ENCODE measurements at regions of chr11 and their contacts with region 1.

Region 1: DNA sequence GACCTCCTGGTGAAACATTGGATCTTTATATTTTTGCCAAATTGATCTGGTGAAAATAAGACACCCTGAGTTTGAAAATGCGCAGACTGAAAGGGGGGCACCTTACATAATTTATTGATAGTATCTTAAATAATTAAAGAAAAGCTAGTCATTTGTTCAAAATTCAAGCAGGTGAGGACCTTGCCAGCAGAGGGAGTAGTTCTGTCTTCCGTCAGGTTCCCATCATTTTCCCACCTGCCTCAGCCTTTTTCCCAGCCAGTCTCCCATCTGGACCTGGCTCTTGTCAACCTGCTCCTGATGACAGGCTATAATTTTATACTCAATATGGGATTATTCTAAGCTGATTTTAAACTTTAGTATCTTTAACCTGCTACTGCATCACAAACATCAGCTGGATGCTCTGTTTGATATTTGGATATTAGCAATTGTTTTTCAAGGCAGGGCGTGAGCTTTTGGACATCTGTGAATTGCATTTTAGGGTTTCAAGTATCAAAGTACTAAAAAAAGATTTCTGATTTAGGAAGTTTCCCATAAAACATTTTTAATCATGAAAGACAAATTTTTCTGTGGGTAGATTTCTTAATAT is 132.0 kb downstream of the ELP4 start:
- DNase-seq: peak; percentile 49

Region 2: DNA sequence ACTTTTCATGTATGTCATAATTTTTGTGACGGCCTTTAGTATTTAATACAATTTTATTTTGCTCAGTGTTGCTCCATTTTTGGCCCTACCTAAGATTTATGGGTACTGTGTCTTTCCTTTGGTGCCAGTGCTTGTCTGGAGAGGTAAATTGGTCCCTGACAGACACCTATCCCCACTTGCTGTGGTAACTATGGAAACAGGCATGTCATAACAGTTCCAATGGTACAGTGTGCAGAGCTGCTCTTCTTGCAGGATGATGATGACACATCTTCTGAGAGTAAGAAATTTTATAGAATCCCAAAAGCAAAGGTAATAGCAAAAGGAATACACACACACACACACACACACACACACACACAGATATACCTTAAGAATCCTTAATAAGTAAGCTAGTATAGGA is 13.5 kb before region 1 on chr11:
- CTCF ChIA-PET with region 1: no interaction called
- POLR2A ChIA-PET with region 1: no interaction called
- DNase-seq: no peak

Region 3: GRCh38 chr11:31690041-31690440 is 48.5 kb after region 1 on chr11:
- CTCF ChIA-PET with region 1: no interaction called
- POLR2A ChIA-PET with region 1: no interaction called
- DNase-seq: no peak

Region 4: GRCh38 chr11:31870609-31871309 is 229.2 kb after region 1 on chr11:
- CTCF ChIA-PET with region 1: interaction called, 12 read pairs
- POLR2A ChIA-PET with region 1: no interaction called
- DNase-seq: peak; percentile 75